ENCODE measurements at regions of chr18 and their contacts with region 1.

Region 1: GRCh38 chr18:45384137-45384961 is 230.9 kb upstream of the SLC14A2 start:
- DNase-seq: peak; percentile 48
- CTCF ChIP-seq: peak; percentile 62

Region 2: DNA sequence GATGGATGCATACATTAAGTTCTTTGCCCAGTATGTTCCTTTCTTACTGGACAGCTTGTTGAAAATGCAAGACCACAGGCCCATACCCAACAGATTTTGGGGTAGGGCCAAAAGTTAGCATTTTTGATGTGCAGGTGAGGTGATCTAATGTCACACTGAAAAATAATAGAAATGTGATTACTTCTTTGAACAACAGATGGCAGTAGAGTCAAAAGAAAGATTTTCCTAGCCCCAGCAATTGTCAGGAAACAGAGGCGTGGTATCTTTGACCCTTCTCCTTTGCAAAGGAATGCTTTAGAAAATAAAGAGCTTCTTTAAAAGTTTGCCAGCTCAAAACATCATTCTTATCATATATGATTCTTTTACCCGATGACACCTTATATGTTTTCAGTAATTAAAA is 1763.4 kb before region 1 on chr18:
- CTCF ChIA-PET with region 1: interaction called, 87 read pairs
- POLR2A ChIA-PET with region 1: no interaction called
- DNase-seq: peak; percentile 21
- CTCF ChIP-seq: peak; percentile 47

Region 3: DNA sequence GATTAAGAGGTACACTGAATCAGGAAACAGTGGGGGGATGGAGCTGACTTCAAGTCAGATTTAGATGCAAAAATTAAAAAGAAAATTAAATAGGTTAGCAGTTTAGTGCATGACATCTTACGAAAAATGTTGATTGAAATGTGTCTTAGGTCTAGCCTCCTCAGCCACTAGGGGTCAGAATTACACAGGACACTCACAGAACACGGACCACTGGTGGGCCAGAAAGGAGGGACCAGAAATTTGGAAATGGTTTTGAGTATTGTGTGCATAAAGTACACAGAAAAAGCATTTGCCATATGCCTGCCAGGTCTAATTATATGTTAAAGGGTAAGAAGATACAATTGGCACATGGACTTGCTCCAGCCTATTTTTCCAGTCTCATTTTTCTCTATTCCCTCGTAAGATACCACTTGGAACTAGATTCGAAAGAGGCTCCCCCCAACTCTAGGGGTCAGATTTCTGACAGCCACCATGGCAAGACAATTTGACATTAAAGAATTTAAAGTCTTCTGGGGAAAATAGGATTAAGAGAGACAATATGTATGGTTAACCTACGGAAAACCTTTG is 1253.9 kb before region 1 on chr18:
- CTCF ChIA-PET with region 1: interaction called, 25 read pairs
- POLR2A ChIA-PET with region 1: no interaction called
- DNase-seq: peak; percentile 26
- CTCF ChIP-seq: peak; percentile 62

Region 4: GRCh38 chr18:45554389-45554737 is 170.0 kb after region 1 on chr18:
- CTCF ChIA-PET with region 1: no interaction called
- POLR2A ChIA-PET with region 1: no interaction called
- DNase-seq: no peak
- CTCF ChIP-seq: no peak

Region 5: DNA sequence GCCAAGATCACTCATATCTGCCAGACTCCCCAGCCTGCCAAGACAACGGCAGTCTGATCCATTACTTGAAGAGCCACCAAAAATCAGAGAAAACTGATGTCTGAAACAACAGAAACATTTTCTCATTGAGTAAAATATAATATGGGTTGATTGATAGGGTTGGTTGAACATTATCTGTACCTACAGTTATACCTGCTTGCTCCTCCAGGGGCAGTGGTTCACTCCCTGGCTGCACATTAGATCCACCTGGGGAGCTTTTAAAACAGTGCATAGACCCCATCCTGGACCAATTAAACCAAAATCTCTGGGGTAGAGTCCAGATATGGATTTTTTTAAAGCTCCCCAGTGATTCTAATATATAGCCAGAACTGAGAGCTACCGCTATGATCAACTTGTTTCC is 187.4 kb after region 1 on chr18:
- CTCF ChIA-PET with region 1: no interaction called
- POLR2A ChIA-PET with region 1: no interaction called
- DNase-seq: no peak
- CTCF ChIP-seq: no peak